A549 (cell line): ENCODE measurements at regions of chr15 and their contacts with region 1.

Region 1: GRCh38 chr15:74964794-74965193 is 8.2 kb upstream of the RPP25 start:
- DNase-seq: no peak
- ATAC-seq: peak; percentile 37 to 40; a peak in 2 of 6 replicates
- H3K4me3 ChIP-seq: no peak overlapping the region
- H3K27ac ChIP-seq: peak overlapping the region in 1 of 2 experiments; percentile 48; a peak in 2 of 6 replicates
- H3K4me1 ChIP-seq: peaks cover 15% of the 10 kb centered on the region; the same call in 2 of the 3 replicates
- CTCF ChIP-seq: no peak
- EP300 ChIP-seq: no peak
- POLR2A ChIP-seq: no peak
- RAD21 ChIP-seq: no peak

Region 2: DNA sequence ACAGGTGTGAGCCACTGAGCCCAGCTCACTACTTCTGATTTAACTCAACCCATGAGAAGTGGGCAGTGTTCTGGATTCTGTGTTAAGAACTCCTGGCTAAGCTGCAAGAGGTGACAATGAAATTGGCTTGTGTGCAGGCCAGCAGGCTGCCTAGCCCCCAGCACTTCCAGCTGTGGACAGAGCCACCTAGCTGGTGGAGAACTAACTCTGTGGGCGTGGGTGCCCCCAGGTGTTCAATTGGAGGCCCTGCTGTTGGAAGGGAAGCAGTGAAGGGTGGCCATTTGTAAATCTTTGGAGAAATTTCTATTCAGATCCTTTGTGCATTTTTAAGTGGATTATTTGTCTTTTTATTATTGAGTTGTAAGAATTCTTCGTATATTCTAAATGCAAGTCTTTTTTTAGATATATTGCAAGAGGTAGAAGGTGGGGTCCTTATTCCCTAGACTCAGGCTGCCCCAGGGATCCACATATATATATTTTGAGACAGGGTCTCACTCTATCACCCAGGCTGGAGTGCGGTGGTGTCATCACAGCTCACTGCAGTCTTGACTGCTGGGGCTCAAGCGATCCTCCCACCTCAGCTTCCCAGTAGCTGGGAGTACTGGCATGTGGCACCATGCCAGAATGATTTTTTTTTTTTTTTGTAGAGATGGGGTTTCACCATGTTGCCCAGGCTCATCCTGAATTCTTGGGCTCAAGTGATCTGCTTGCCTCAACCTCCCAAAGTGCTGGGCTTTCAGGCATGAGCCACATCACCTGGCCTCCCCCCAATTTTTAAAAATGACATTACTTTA is 23.4 kb after region 1 on chr15:
- CTCF ChIA-PET with region 1: interaction called, 10 read pairs
- POLR2A ChIA-PET with region 1: interaction called, 3 read pairs
- DNase-seq: peak; percentile 64 to 78
- ATAC-seq: peak; percentile 95 to 97
- H3K4me3 ChIP-seq: no peak overlapping the region
- H3K27ac ChIP-seq: no peak overlapping the region
- H3K4me1 ChIP-seq: peaks cover 11% of the 10 kb centered on the region
- CTCF ChIP-seq: peak; percentile 68
- EP300 ChIP-seq: no peak
- POLR2A ChIP-seq: no peak
- RAD21 ChIP-seq: peak; percentile 79 to 84